ENCODE measurements at regions of chr2 and their contacts with region 1.

Region 1: GRCh38 chr2:61135510-61135909 is 26.5 kb upstream of the C2orf74 start:
- DNase-seq: peak; percentile 40
- H3K4me3 ChIP-seq: no peak overlapping the region
- H3K27ac ChIP-seq: no peak overlapping the region
- H3K4me1 ChIP-seq: no peaks in the 10 kb centered on the region
- CTCF ChIP-seq: peak; percentile 79

Region 2: DNA sequence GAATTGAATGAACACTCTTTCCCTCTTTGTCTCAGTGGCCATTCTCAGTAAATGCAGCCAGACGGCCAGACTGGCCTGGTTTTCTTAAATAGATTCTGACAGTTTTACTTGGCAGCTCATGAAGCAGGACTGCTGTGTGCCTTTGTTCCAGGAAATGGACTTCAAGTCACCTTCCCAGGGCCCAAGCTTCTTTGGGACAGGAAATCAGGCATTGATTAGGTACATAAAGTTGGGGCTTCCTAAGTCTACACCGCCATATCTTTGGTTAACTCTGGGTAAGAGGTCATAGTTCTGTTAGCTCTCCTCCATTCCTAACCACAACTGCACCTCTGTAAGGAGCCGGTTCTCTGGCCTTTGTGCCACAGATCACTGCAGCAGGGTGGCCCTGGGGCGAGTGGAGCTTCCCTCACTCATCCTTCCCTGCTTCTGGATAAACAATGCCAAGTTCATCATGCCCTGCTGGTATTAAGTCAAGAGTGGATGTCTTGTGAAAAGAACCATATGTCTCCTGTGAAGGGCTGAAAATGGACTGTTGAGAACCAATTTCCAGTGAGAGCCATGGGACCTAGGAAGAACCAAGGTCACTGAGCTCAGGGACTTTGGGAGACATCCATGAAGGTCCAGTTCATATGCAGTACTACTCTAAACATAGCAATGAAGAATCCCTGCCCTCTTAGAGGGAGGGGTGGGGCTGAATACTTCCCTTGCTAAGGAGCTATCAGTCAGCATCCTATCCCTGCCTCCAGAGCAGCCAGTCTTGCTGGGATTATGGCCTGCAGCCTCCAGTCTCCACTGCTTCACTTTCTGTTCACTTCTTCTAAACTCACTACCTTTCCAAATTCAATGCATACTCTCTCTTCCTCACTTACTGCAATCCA is 525.2 kb after region 1 on chr2:
- CTCF ChIA-PET with region 1: no interaction called
- POLR2A ChIA-PET with region 1: no interaction called
- intact Hi-C with region 1: loop called (anchors 10 kb)
- DNase-seq: no peak
- H3K4me3 ChIP-seq: no peak overlapping the region
- H3K27ac ChIP-seq: no peak overlapping the region
- H3K4me1 ChIP-seq: no peaks in the 10 kb centered on the region
- CTCF ChIP-seq: no peak